Activated CD4-positive, alpha-beta memory T cell treated with anti-CD3 and anti-CD28 coated beads, Interleukin-2, amount 10 ng/mL, durations not matched to agents 7 days and 5 days (primary cell): ENCODE measurements at regions of chr20 and their contacts with region 1.

Region 1: DNA sequence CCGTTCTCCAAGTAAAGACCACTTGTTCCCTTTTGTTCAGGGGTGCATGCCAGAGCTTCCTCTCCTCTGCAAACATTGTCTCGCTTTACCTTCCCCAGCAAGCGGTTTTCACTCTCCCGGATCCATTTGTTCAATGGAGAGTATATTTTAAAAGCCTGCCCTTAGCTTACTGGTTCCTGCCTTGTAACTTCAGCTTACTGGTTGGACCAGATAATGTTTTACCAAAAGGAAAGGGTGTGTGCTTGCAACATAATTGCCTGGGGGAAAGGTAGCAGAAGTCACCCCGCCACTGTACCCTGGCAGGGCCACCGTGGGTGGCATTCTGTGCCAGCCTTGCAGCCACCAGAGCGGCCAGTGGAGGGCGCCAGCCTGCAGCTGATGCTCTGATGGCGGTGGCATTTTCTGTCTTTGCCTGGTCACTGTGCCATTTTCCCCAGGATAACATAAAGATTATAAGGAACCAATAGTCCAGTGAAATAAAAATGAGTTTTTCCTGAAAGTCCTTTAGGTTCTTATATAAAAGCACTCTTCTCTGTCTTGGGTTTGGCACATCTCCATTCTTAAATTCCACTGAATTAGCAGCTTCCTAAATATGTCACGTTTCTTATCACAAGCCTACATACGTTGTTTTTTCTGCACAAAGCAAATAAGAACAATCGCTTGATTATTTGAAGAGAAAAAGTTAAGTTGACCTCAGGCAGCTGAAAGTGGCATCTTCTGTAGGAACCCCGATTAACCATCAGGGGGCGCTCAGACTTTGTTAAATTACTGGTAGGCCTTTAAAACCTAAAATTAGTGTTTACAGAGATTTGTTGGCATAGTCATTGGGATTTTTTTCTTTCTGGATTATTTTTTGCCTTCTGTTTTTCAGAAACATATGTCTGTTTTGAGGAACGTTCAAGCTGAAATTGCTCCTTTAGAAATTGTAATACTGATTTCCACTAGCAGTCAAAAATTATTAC is 67.4 kb upstream of the XRN2 start:
- DNase-seq: peak; percentile 68
- H3K4me3 Mint-ChIP-seq: no peak overlapping the region
- H3K27ac Mint-ChIP-seq: no peak overlapping the region
- H3K4me1 Mint-ChIP-seq: peaks cover 2% of the 10 kb centered on the region
- H3K27me3 Mint-ChIP-seq: no peaks in the 10 kb centered on the region

Region 2: GRCh38 chr20:21323640-21324039 is 87.9 kb after region 1 on chr20:
- CTCF ChIA-PET with region 1: interaction called, 10 read pairs
- POLR2A ChIA-PET with region 1: no interaction called
- DNase-seq: no peak
- H3K4me3 Mint-ChIP-seq: no peak overlapping the region
- H3K27ac Mint-ChIP-seq: no peak overlapping the region
- H3K4me1 Mint-ChIP-seq: peaks cover 40% of the 10 kb centered on the region
- H3K27me3 Mint-ChIP-seq: no peaks in the 10 kb centered on the region

Region 3: GRCh38 chr20:21395666-21396598 is 160.2 kb after region 1 on chr20:
- CTCF ChIA-PET with region 1: interaction called, 18 read pairs
- POLR2A ChIA-PET with region 1: no interaction called
- DNase-seq: peak; percentile 40
- H3K4me3 Mint-ChIP-seq: peak overlapping the region; percentile 63
- H3K27ac Mint-ChIP-seq: no peak overlapping the region
- H3K4me1 Mint-ChIP-seq: peaks cover 26% of the 10 kb centered on the region
- H3K27me3 Mint-ChIP-seq: peaks cover 75% of the 10 kb centered on the region

Region 4: GRCh38 chr20:21505161-21505809 is 269.5 kb after region 1 on chr20:
- CTCF ChIA-PET with region 1: interaction called, 209 read pairs
- POLR2A ChIA-PET with region 1: interaction called, 10 read pairs
- DNase-seq: peak; percentile 74
- H3K4me3 Mint-ChIP-seq: peak overlapping the region; percentile 39
- H3K27ac Mint-ChIP-seq: no peak overlapping the region
- H3K4me1 Mint-ChIP-seq: peaks cover 37% of the 10 kb centered on the region
- H3K27me3 Mint-ChIP-seq: peaks cover 52% of the 10 kb centered on the region

Region 5: DNA sequence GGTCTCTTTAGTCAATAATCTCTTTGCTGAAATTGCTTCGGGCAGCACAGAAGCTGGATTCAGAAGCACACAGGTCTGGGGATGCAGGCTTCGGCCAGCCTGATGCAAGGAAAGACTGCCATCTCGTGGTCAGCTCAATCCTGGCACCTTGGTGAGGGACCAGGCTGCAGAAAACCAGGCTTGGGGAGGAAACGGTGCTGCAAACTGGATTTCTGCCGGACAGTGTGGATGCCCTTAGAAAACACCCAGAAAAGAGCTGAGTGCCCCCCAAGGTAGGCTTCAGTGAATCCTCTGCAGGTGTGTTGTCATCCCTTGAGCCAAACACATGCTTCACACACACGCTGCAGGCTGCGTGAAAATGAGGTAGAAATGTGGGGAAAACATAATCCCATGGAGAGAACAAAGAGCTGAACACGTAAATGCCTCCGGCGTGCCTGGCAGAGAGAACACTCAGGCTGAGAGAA is 379.9 kb after region 1 on chr20:
- CTCF ChIA-PET with region 1: interaction called, 14 read pairs
- POLR2A ChIA-PET with region 1: no interaction called
- DNase-seq: peak; percentile 50
- H3K4me3 Mint-ChIP-seq: no peak overlapping the region
- H3K27ac Mint-ChIP-seq: no peak overlapping the region
- H3K4me1 Mint-ChIP-seq: peaks cover 4% of the 10 kb centered on the region
- H3K27me3 Mint-ChIP-seq: peaks cover 7% of the 10 kb centered on the region